ENCODE measurements at regions of chr22 and their contacts with region 1.

Region 1: GRCh38 chr22:50148991-50149721 is 21.4 kb upstream of the PANX2 start:
- DNase-seq: peak; percentile 69 to 76 (median 75)
- H3K4me3 ChIP-seq: no peak overlapping the region
- H3K4me3 Mint-ChIP-seq: no peak overlapping the region
- H3K27ac ChIP-seq: no peak overlapping the region
- H3K27ac Mint-ChIP-seq: peak overlapping the region in 1 of 7 donors; percentile 7
- H3K4me1 ChIP-seq: no peaks in the 10 kb centered on the region
- H3K4me1 Mint-ChIP-seq: peaks cover 0 to 4% (median under 1%) of the 10 kb centered on the region in 4 donors
- H3K27me3 ChIP-seq: no peaks in the 10 kb centered on the region
- H3K27me3 Mint-ChIP-seq: peaks cover 2 to 3% of the 10 kb centered on the region in 2 donors

Region 2: GRCh38 chr22:50209893-50210292 is 60.7 kb after region 1 on chr22:
- CTCF ChIA-PET with region 1: interaction called, 30 read pairs
- POLR2A ChIA-PET with region 1: interaction called, 4 read pairs
- intact Hi-C with region 1: no loop called
- DNase-seq: peak; percentile 66 to 75 (median 71)
- H3K4me3 ChIP-seq: no peak overlapping the region
- H3K4me3 Mint-ChIP-seq: peak overlapping the region in 1 of 8 donors; percentile 33
- H3K27ac ChIP-seq: no peak overlapping the region
- H3K27ac Mint-ChIP-seq: peak overlapping the region; percentile 61 to 94 (median 80)
- H3K4me1 ChIP-seq: peaks cover 8% of the 10 kb centered on the region
- H3K4me1 Mint-ChIP-seq: peaks cover 15 to 40% (median 20%) of the 10 kb centered on the region in 4 donors
- H3K27me3 ChIP-seq: no peaks in the 10 kb centered on the region
- H3K27me3 Mint-ChIP-seq: no peaks in the 10 kb centered on the region

Region 3: DNA sequence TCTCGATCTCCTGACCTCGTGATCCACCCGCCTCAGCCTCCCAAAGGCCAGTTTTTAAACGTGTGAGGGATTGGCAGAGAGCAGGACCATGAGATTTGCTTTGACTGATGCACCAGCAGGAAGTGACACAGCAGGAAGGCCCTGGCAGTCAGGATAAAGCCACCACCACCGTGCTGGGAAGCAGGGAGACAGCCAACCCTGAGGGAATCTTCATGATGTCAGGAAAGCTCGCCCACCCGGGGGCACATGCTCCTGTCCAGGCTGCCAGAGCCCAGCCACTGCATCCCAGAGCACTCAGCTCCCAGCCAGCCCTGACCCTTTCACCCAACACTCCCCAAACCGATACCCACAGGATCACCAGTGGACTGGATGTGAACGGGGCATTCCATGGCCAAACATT is 89.6 kb after region 1 on chr22:
- CTCF ChIA-PET with region 1: interaction called, 19 read pairs
- POLR2A ChIA-PET with region 1: no interaction called
- intact Hi-C with region 1: loop called (anchors 1 kb)
- DNase-seq: no peak
- H3K4me3 ChIP-seq: no peak overlapping the region
- H3K4me3 Mint-ChIP-seq: no peak overlapping the region
- H3K27ac ChIP-seq: no peak overlapping the region
- H3K27ac Mint-ChIP-seq: peak overlapping the region in 1 of 7 donors; percentile 53
- H3K4me1 ChIP-seq: peaks cover 27% of the 10 kb centered on the region
- H3K4me1 Mint-ChIP-seq: peaks cover 32 to 66% (median 40%) of the 10 kb centered on the region in 4 donors
- H3K27me3 ChIP-seq: no peaks in the 10 kb centered on the region
- H3K27me3 Mint-ChIP-seq: no peaks in the 10 kb centered on the region

Region 4: DNA sequence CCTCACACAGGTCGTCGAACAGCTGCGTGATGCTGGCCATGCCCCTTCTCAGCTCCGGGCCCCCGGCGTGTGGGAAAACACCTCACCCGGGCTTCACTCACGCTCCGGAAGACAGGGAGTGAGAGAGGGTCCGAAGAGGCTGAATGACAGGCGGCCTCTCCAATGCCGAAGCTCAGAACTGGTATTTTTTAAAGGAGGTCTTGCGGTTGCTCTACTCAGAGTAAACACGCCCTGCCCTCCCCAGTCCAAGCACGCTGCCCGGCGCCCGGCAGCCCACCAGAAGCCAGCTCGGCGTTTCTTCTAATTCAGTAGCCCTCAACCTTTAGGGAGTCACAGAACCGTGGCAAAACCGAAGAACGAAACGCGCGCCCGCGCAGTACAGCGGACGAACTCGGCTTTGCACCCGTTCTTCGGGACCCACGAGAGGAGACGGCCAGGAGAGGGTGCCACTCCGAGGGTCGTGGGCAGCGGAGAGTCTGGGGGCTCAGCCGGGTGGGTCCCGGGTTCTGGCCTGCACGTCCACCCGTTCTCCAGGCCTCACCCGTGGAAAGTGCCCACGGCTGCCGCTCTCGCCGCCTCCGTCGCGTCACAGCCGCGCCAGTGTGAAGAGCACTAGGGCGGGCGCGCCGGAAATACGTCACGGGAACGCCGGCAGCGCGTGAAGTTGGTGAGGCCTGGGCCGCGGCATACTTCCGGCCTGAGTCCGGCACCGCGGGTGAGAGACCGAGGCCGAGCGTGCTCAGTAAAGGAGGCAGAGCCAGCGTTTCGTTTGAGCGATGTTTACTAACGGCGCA is 95.5 kb after region 1 on chr22 and contains the start of gene TUBGCP6:
- CTCF ChIA-PET with region 1: interaction called, 19 read pairs
- POLR2A ChIA-PET with region 1: no interaction called
- intact Hi-C with region 1: loop called (anchors 1 kb)
- DNase-seq: peak; percentile 89 to 93 (median 91)
- H3K4me3 ChIP-seq: peak within 1 kb of the TSS; percentile 37 to 99
- H3K4me3 Mint-ChIP-seq: peak within 1 kb of the TSS; percentile 95 to 100 (median 98)
- H3K27ac ChIP-seq: peak within 1 kb of the TSS; percentile 98
- H3K27ac Mint-ChIP-seq: peak within 1 kb of the TSS; percentile 90 to 100 (median 99)
- H3K4me1 ChIP-seq: peaks cover 69% of the 10 kb centered on the region
- H3K4me1 Mint-ChIP-seq: peaks cover 23 to 64% (median 37%) of the 10 kb centered on the region in 4 donors
- H3K27me3 ChIP-seq: no peaks in the 10 kb centered on the region
- H3K27me3 Mint-ChIP-seq: no peaks in the 10 kb centered on the region
- total RNA-seq, gene TUBGCP6: 132 to 133 TPM

Measured in CD4-positive, alpha-beta memory T cell (primary cell).